ENCODE measurements at regions of chr19 and their contacts with region 1.

Region 1: DNA sequence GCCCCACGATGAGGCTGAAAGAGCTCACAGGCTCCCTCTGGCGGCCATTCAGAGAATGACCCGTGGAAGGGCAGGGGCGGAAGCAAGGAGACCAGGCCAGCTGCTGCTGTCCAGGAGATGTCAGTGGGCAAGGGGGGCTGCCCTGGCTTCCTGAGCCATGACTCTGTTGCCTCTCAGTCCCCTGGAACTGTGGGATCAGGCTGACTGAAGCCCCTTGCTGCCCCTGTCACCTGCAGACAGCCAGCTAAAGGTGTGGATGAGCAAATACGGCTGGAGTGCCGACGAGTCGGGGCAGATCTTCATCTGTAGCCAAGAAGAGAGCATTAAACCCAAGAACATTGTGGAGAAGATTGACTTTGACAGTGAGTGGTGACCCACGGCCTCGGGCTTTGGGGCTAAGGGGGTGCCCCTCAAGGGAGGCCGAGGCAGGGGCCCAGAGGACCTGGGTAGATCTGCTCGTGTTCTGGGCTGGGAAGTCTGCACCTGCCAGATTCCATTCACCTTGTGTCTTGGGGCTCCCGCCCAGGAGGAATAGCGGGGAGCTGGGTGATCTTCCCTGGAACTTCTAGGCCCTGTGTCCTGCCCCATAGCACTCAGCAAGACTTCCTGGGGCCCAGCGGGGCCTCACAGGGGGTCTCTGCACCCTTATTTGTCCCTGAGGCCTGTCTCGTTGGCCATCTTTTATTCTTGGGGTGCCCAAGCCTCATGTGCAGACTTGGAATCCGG is 12.5 kb upstream of the ACTN4 start:
- DNase-seq: peak; percentile 46 to 77
- H3K4me3 ChIP-seq: no peak overlapping the region
- H3K27ac ChIP-seq: no peak overlapping the region
- H3K4me1 ChIP-seq: peaks cover 36% of the 10 kb centered on the region
- H3K27me3 ChIP-seq: no peaks in the 10 kb centered on the region
- CTCF ChIP-seq: peak; percentile 95

Region 2: DNA sequence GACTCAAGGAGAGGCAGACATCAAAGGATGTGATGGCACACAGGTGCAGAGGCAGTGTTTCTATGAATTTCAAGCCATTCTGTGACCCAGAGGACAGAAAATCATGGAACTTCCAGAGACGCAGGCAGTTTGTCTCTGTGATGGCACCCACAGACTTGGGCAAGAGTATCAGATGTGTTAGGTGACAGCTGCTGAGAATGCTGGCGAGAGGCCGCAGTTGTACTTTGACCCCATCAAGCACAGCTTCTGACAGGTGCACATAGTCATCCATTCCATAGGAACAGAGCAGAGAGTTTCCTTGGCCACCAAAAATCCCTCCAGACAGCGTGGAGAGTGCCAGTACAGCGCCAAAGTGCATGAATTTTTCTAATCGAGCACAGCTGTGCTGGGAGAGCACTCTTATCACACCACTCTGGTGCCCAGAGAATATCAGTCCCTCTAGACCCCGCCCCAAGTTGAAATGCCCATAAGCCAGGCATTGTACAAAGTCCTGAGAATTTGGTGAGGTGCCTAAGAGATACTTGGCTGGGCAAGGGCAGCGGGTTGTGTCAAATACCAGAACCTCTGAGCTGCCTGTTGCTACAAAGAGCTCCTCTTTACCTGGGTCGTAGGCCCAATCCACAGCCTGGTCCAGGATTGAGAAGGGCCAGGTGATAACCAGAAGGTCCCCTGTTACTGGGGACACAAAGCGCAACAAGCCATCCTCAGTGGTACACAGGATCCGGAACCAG is 740.9 kb before region 1 on chr19:
- CTCF ChIA-PET with region 1: no interaction called
- POLR2A ChIA-PET with region 1: no interaction called
- intact Hi-C with region 1: loop called (anchors 5 kb)
- DNase-seq: no peak
- H3K4me3 ChIP-seq: no peak overlapping the region
- H3K27ac ChIP-seq: no peak overlapping the region
- H3K4me1 ChIP-seq: no peaks in the 10 kb centered on the region
- H3K27me3 ChIP-seq: peaks cover 68% of the 10 kb centered on the region
- CTCF ChIP-seq: no peak

Region 3: GRCh38 chr19:38544034-38544958 is 90.6 kb before region 1 on chr19:
- CTCF ChIA-PET with region 1: no interaction called
- POLR2A ChIA-PET with region 1: interaction called, 4 read pairs
- intact Hi-C with region 1: loop called (anchors 1 kb)
- DNase-seq: peak; percentile 60 to 87
- H3K4me3 ChIP-seq: no peak overlapping the region
- H3K27ac ChIP-seq: peak overlapping the region; percentile 47
- H3K4me1 ChIP-seq: peaks cover 24% of the 10 kb centered on the region
- H3K27me3 ChIP-seq: no peaks in the 10 kb centered on the region
- CTCF ChIP-seq: peak; percentile 83

Region 4: GRCh38 chr19:38666663-38667511 is 32.0 kb after region 1 on chr19:
- CTCF ChIA-PET with region 1: interaction called, 10 read pairs
- POLR2A ChIA-PET with region 1: interaction called, 18 read pairs
- intact Hi-C with region 1: loop called (anchors 2 kb)
- DNase-seq: no peak
- H3K4me3 ChIP-seq: no peak overlapping the region
- H3K27ac ChIP-seq: peak overlapping the region; percentile 66
- H3K4me1 ChIP-seq: peaks cover 66% of the 10 kb centered on the region
- H3K27me3 ChIP-seq: no peaks in the 10 kb centered on the region
- CTCF ChIP-seq: no peak

Region 5: GRCh38 chr19:38718747-38719543 is 84.0 kb after region 1 on chr19:
- CTCF ChIA-PET with region 1: no interaction called
- POLR2A ChIA-PET with region 1: no interaction called
- intact Hi-C with region 1: loop called (anchors 1 kb)
- DNase-seq: peak; percentile 56 to 93
- H3K4me3 ChIP-seq: no peak overlapping the region
- H3K27ac ChIP-seq: peak overlapping the region; percentile 80
- H3K4me1 ChIP-seq: peaks cover 11% of the 10 kb centered on the region
- H3K27me3 ChIP-seq: no peaks in the 10 kb centered on the region
- CTCF ChIP-seq: no peak; the same call in 1 of the 2 replicates

Region 6: DNA sequence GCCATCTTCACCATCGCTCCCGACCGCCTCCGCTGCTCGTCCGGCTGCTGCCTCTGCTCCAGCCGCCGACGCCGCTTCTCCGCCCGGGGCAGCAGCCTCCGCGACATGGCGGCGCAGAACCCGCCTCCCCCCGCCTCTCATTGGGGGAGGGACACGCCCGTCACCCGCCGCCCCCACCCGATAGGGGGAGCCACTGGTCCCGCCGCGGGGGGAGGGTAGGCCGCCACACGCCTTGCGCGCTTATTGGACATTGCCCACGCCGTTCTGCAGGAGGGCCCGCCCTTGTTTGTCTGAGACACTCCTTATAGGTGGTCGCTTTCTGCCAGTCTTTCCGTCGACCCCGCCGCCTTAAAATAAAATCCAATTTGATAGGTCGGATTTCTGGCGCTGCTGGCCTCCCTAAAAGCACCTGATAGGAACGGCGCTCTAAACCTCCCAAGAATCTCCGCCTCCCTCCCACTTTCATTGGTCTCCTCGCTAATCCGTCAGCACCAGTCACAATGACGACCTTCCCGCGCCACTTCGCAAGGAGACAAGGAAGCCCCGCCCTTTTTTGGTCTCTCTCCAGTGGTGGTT is 215.0 kb after region 1 on chr19 and contains the start of gene HNRNPL:
- CTCF ChIA-PET with region 1: interaction called, 4 read pairs
- POLR2A ChIA-PET with region 1: interaction called, 12 read pairs
- intact Hi-C with region 1: loop called (anchors 5 kb)
- DNase-seq: peak; percentile 99
- H3K4me3 ChIP-seq: peak within 1 kb of the TSS; percentile 79
- H3K27ac ChIP-seq: peak within 1 kb of the TSS; percentile 93
- H3K4me1 ChIP-seq: peaks cover 35% of the 10 kb centered on the region
- H3K27me3 ChIP-seq: no peaks in the 10 kb centered on the region
- CTCF ChIP-seq: peak; percentile 63
- total RNA-seq, gene HNRNPL: 368 and 443 TPM in 2 replicates

Measured in PC-9 (cell line).